Endothelial cell of umbilical vein (primary cell): ENCODE measurements at regions of chrX and their contacts with region 1.

Region 1: DNA sequence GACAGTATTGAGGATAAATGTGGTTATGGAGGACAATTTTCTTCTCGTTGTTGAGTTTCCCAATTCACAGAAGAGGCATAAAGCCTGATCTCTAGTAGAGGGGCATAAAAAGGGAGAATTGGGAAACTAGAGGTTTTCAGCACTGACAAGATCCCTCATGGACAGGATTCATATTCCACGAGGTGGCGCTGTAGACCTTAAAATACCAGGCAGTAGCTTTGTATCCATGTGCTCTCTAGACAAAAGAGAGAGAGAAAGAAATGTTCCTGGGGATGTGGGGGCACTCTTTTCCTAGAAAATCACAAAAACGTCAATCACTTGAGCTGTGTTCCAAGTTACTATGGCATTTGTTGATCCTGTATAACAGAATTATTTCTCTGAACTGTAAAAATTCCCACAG is 128.3 kb downstream of the MAGEE1 start:
- DNase-seq: peak; percentile 19
- H3K4me3 ChIP-seq: no peak overlapping the region
- H3K27ac ChIP-seq: no peak overlapping the region
- H3K4me1 ChIP-seq: no peaks in the 10 kb centered on the region
- H3K27me3 ChIP-seq: no peaks in the 10 kb centered on the region
- CTCF ChIP-seq: peak; percentile 8 to 25
- POLR2A ChIP-seq: no peak

Region 2: GRCh38 chrX:77597090-77597489 is 1041.3 kb after region 1 on chrX:
- CTCF ChIA-PET with region 1: no interaction called
- POLR2A ChIA-PET with region 1: no interaction called
- dilution Hi-C with region 1: no loop called
- intact Hi-C with region 1: loop called (anchors 5 kb)
- DNase-seq: peak; percentile 41
- H3K4me3 ChIP-seq: no peak overlapping the region
- H3K27ac ChIP-seq: no peak overlapping the region
- H3K4me1 ChIP-seq: no peaks in the 10 kb centered on the region
- H3K27me3 ChIP-seq: no peaks in the 10 kb centered on the region
- CTCF ChIP-seq: peak in 1 of 2 donors; percentile 14
- POLR2A ChIP-seq: no peak

Region 3: GRCh38 chrX:77628294-77629025 is 1072.6 kb after region 1 on chrX:
- CTCF ChIA-PET with region 1: interaction called, 10 read pairs
- POLR2A ChIA-PET with region 1: no interaction called
- dilution Hi-C with region 1: no loop called
- intact Hi-C with region 1: loop called (anchors 5 kb)
- DNase-seq: peak; percentile 2
- H3K4me3 ChIP-seq: no peak overlapping the region
- H3K27ac ChIP-seq: no peak overlapping the region
- H3K4me1 ChIP-seq: no peaks in the 10 kb centered on the region
- H3K27me3 ChIP-seq: no peaks in the 10 kb centered on the region
- CTCF ChIP-seq: no peak
- POLR2A ChIP-seq: no peak

Region 4: DNA sequence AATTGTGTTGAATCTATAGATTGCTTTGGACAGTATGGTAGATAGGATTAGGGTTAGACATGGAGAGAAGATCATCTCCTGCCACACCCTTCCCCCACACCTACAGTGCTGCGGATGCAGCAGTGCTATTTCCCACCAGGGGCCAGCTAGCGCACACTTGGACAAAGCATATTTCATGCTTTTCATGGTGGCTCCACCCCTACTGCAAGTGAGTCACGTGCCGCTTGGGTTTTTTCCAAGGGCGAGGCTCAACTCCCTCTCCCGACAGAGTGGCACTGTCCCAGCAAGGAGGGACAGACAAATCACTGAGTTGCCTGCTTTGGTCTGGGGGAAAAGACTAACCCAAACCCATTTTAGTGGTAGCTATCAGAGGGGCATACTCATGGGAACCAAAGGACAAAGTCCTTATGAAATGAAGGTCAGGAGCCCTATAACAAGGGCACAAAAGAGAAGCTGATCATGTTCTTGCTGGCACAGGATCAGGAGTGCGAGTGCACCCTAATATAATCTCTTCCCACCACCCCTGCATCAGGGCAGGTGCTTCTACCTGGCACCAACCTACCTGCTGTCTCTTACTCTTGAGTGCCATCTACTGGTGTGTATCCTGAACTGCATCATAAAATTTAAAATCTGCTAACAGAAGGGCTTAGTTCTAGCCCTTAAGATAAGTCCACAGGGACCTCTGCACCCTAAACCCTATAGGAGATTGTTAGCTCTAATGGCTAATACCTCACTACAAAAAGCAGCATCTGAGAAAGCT is 1468.7 kb after region 1 on chrX:
- CTCF ChIA-PET with region 1: interaction called, 10 read pairs
- POLR2A ChIA-PET with region 1: no interaction called
- dilution Hi-C with region 1: no loop called
- intact Hi-C with region 1: loop called (anchors 5 kb)
- DNase-seq: peak; percentile 16
- H3K4me3 ChIP-seq: no peak overlapping the region
- H3K27ac ChIP-seq: no peak overlapping the region
- H3K4me1 ChIP-seq: no peaks in the 10 kb centered on the region
- H3K27me3 ChIP-seq: no peaks in the 10 kb centered on the region
- CTCF ChIP-seq: peak; percentile 30 to 38
- POLR2A ChIP-seq: no peak

Region 5: DNA sequence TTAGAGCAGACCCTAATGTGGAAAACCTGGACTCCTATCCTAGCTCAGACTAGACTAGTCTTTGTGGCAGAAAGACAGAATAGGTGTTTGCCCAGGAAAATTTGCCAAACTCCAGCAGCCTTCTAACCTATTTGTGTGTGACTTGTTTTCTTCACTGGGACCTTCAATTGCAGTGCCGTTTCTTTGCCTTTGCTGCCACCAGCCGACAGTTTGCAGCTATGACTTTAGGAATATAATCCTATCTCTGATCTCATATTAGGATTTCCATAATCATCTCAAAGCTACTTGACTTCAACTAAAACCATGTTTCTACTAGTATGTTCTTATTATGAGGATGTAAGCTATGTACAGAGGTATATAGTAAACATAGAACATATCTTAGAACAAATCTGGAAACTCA is 1473.8 kb after region 1 on chrX:
- CTCF ChIA-PET with region 1: interaction called, 10 read pairs
- POLR2A ChIA-PET with region 1: no interaction called
- dilution Hi-C with region 1: no loop called
- intact Hi-C with region 1: loop called (anchors 5 kb)
- DNase-seq: peak; percentile 32
- H3K4me3 ChIP-seq: no peak overlapping the region
- H3K27ac ChIP-seq: no peak overlapping the region
- H3K4me1 ChIP-seq: no peaks in the 10 kb centered on the region
- H3K27me3 ChIP-seq: no peaks in the 10 kb centered on the region
- CTCF ChIP-seq: peak; percentile 22 to 36
- POLR2A ChIP-seq: no peak